IMR-90 (cell line): ENCODE measurements at regions of chr15 and their contacts with region 1.

Region 1: DNA sequence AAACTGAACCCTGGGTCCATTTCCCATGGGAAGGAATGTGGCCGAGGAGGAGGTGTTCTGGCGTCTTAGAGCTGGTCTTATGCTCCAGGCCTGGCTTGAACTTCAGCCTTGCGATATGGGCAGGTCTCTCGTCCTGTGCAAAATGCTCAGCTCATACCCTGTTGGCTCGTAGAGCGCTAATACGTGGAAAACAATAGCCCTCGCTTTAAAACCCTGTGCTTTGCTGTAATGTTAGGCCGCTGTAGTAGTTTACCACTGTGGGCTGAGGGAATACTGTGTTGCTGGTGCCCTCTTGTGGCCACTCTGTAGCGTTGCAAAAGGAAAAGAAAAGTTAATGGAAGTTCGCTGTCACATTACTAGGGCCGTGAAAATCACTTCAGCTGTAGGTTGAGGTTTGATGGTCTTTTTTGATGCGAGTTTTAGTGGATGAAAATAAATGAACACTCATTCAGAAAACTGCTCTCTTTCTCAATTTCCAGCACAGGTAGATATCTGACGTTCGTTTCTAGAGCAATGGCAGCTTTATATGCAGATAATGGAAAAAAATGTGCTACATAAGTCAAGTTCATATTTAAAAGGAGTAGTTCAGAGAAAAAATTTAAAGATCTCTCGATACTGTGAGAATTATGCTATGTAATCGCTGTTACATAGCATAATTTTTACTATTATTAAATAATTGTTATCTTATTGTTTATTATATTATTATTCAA is 92.9 kb downstream of the MCTP2 start:
- DNase-seq: peak; percentile 65
- ATAC-seq: peak; percentile 97
- H3K4me3 ChIP-seq: no peak overlapping the region
- H3K27ac ChIP-seq: no peak overlapping the region
- H3K4me1 ChIP-seq: no peaks in the 10 kb centered on the region
- H3K27me3 ChIP-seq: no peaks in the 10 kb centered on the region
- CTCF ChIP-seq: peak; percentile 92
- POLR2A ChIP-seq: no peak
- RAD21 ChIP-seq: peak; percentile 93

Region 2: DNA sequence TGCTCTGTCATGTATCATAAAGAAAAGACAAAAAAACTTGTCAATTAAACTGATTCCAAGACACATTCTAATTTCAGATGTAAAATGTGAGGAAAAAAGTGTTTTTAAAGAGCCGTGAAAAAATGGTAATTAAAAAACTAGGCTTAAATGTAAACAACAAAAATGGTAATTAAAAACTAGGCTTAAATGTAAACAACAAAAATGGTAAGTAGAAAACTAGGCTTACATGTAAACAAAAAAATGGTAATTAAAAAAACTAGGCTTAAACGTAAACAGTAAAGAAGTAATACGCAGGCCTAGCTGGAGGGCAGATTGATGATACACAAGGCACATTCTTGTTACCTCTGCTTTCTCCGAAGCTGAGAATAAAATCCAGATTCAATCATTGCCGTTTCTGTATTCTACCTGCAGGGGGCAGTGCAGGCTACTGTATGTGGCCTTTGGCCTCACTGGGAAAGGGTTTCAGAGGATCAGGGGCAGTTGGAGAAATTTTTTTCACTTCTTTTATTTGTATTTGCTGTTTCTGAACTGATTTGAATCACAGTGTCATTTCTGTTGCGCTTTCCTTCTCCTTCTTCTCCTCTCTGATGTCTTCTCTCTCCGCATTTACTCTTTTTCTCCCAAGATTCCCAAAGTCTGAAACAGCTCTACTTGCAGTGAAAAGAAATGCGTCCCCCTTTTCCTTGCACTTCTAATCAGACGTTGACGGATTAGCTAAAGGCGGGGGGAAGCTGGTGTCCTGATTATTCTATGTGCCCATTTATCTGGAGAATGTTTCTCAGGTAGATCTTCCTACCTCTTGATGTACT is 160.1 kb before region 1 on chr15:
- CTCF ChIA-PET with region 1: interaction called, 58 read pairs
- POLR2A ChIA-PET with region 1: no interaction called
- dilution Hi-C with region 1: no loop called
- in situ Hi-C with region 1: loop called (anchors 5 kb)
- intact Hi-C with region 1: loop called (anchors 1 kb)
- DNase-seq: peak; percentile 51
- ATAC-seq: peak; percentile 65
- H3K4me3 ChIP-seq: no peak overlapping the region
- H3K27ac ChIP-seq: no peak overlapping the region
- H3K4me1 ChIP-seq: no peaks in the 10 kb centered on the region
- H3K27me3 ChIP-seq: no peaks in the 10 kb centered on the region; the same call in 1 of the 2 replicates
- CTCF ChIP-seq: peak; percentile 71
- POLR2A ChIP-seq: no peak
- RAD21 ChIP-seq: peak; percentile 86

Region 3: DNA sequence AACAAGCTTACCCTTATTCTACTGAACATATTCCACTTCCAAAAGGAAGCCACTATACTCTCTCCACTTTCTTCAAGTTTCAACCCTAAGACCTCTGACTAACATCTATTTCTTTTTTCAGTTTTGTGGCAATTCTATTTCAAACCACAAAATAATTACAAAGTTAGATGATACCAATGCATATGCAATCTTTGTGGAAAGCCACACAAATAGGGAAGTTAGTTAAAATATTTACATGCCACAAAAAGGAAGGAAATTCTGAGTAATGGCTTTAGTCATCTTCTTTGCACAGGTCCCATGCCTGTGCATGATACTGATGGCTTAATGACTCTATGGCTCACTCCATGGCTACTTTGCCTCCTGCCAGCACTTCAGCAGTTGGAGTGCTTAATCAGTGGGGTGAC is 149.9 kb before region 1 on chr15:
- CTCF ChIA-PET with region 1: interaction called, 4 read pairs
- POLR2A ChIA-PET with region 1: interaction called, 17 read pairs
- dilution Hi-C with region 1: no loop called
- in situ Hi-C with region 1: no loop called
- intact Hi-C with region 1: no loop called
- DNase-seq: peak; percentile 87
- ATAC-seq: peak; percentile 74
- H3K4me3 ChIP-seq: no peak overlapping the region
- H3K27ac ChIP-seq: peak overlapping the region; percentile 0; the same call in 1 of the 2 replicates
- H3K4me1 ChIP-seq: peaks cover 3% of the 10 kb centered on the region; the same call in 1 of the 2 replicates
- H3K27me3 ChIP-seq: no peaks in the 10 kb centered on the region
- CTCF ChIP-seq: no peak
- POLR2A ChIP-seq: no peak
- RAD21 ChIP-seq: no peak

Region 4: DNA sequence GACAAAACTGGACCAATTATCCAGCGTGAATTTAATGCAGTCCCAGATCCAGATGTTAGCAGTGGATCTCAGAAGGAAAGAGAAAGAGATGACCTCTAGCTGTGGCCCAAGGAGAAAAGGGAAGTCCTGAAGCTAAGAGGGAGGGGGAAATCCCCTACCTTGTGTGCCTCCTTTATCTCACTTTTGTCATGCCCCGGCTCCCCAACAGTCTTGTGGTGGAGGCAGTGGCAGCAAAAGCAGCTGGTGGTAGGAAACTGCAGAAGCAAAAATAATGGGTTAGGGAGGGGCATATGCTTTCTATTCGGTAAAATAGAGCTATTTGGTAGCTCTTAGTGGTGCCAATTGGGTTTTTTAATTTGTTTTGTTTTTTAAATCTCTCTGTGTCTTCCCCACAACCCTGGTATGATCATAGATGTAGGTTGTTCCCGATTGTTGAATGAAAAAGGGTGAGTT is 36.5 kb before region 1 on chr15:
- CTCF ChIA-PET with region 1: no interaction called
- POLR2A ChIA-PET with region 1: no interaction called
- dilution Hi-C with region 1: no loop called
- in situ Hi-C with region 1: no loop called
- intact Hi-C with region 1: no loop called
- DNase-seq: no peak
- ATAC-seq: no peak
- H3K4me3 ChIP-seq: no peak overlapping the region
- H3K27ac ChIP-seq: no peak overlapping the region
- H3K4me1 ChIP-seq: no peaks in the 10 kb centered on the region
- H3K27me3 ChIP-seq: no peaks in the 10 kb centered on the region
- CTCF ChIP-seq: no peak
- POLR2A ChIP-seq: no peak
- RAD21 ChIP-seq: no peak